ENCODE measurements at regions of chr4 and their contacts with region 1.

Region 1: GRCh38 chr4:73315091-73315490 is 56.5 kb upstream of the ANKRD17 start:
- DNase-seq: no peak

Region 2: DNA sequence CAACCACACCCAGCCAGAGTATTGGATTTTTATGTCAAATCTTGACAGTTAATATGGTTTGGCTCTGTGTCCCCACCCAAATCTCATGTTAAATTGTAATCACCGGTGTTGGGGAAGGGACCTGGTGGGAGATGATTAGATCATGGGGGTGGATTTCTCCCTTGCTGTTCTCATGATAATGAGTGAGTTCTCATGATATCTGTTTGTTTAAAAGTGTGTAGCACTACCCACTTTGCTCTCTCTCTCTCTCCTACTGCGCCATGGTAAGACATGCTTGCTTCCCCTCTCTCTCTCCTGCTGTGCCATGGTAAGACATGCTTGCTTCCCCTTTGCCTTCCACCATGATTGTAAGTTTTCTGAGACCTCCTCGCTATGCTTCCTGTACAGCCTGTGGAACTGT is 158.7 kb before region 1 on chr4:
- intact Hi-C with region 1: loop called in 1 of 2 experiments (anchors 5 kb)
- DNase-seq: no peak

Measured in posterior vena cava (tissue), 2 donors.